ENCODE measurements at regions of chr20 and their contacts with region 1.

Region 1: GRCh38 chr20:13546497-13547131 is 92.1 kb downstream of the TASP1 start:
- DNase-seq: peak; percentile 75
- ATAC-seq: no peak
- H3K4me3 Mint-ChIP-seq: no peak overlapping the region
- H3K27ac Mint-ChIP-seq: no peak overlapping the region
- H3K4me1 Mint-ChIP-seq: no peaks in the 10 kb centered on the region
- H3K27me3 Mint-ChIP-seq: no peaks in the 10 kb centered on the region

Region 2: GRCh38 chr20:13468166-13468565 is 78.4 kb before region 1 on chr20:
- CTCF ChIA-PET with region 1: no interaction called
- DNase-seq: no peak
- ATAC-seq: no peak
- H3K4me3 Mint-ChIP-seq: no peak overlapping the region
- H3K27ac Mint-ChIP-seq: no peak overlapping the region
- H3K4me1 Mint-ChIP-seq: no peaks in the 10 kb centered on the region
- H3K27me3 Mint-ChIP-seq: no peaks in the 10 kb centered on the region

Region 3: GRCh38 chr20:13533946-13534345 is 12.7 kb before region 1 on chr20:
- CTCF ChIA-PET with region 1: interaction called, 13 read pairs
- DNase-seq: no peak
- ATAC-seq: no peak
- H3K4me3 Mint-ChIP-seq: no peak overlapping the region
- H3K27ac Mint-ChIP-seq: no peak overlapping the region
- H3K4me1 Mint-ChIP-seq: no peaks in the 10 kb centered on the region
- H3K27me3 Mint-ChIP-seq: no peaks in the 10 kb centered on the region

Region 4: GRCh38 chr20:13813910-13814309 is 267.3 kb after region 1 on chr20:
- CTCF ChIA-PET with region 1: no interaction called
- DNase-seq: no peak
- ATAC-seq: no peak
- H3K4me3 Mint-ChIP-seq: no peak overlapping the region
- H3K27ac Mint-ChIP-seq: no peak overlapping the region
- H3K4me1 Mint-ChIP-seq: no peaks in the 10 kb centered on the region
- H3K27me3 Mint-ChIP-seq: no peaks in the 10 kb centered on the region